Gastrocnemius medialis (tissue), 4 donors: ENCODE measurements at regions of chr7 and their contacts with region 1.

Region 1: GRCh38 chr7:139494835-139495579 is 11.5 kb upstream of the KLRG2 start:
- DNase-seq: no peak
- ATAC-seq: no peak
- H3K4me3 ChIP-seq: no peak overlapping the region
- H3K27ac ChIP-seq: no peak overlapping the region
- H3K4me1 ChIP-seq: no peaks in the 10 kb centered on the region
- H3K27me3 ChIP-seq: no peaks in the 10 kb centered on the region
- CTCF ChIP-seq: no peak
- POLR2A ChIP-seq: no peak

Region 2: GRCh38 chr7:139482662-139483469 is 12.1 kb before region 1 on chr7:
- in situ Hi-C with region 1: no loop called
- intact Hi-C with region 1: no loop called
- DNase-seq: no peak
- ATAC-seq: no peak
- H3K4me3 ChIP-seq: peak overlapping the region; percentile 17 to 44 (median 36)
- H3K27ac ChIP-seq: no peak overlapping the region
- H3K4me1 ChIP-seq: peaks cover 0 to 8% of the 10 kb centered on the region in 2 donors
- H3K27me3 ChIP-seq: peaks cover 28 to 39% (median 33%) of the 10 kb centered on the region in 3 donors
- CTCF ChIP-seq: no peak
- POLR2A ChIP-seq: no peak

Region 3: DNA sequence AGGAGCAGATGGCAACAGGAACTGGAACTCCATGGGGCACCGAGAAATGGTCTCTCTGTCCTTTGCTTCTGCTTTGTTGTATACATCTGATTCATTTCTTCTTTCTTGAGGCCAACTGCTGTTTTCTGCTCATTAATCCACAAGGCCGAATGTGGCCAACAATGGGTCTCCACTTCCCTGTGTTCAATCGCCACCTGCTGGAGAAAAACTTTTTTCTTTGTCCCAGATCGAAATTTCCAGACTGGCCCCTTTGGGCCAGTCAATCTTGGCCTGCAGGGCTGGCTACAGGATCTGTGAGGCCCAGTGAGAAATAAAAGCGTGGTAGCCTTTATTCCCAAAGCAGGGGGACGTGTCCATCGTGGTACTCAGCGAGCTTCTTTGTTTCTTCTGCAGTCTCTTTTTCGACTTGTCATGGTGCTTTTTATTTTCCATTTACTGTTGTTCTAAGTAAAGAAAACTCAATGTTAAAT is 508.9 kb after region 1 on chr7:
- in situ Hi-C with region 1: loop called (anchors 5 to 10 kb)
- intact Hi-C with region 1: loop called (anchors 2 kb)
- DNase-seq: no peak
- ATAC-seq: no peak
- H3K4me3 ChIP-seq: no peak overlapping the region
- H3K27ac ChIP-seq: no peak overlapping the region
- H3K4me1 ChIP-seq: no peaks in the 10 kb centered on the region
- H3K27me3 ChIP-seq: no peaks in the 10 kb centered on the region
- CTCF ChIP-seq: peak in 4 of 5 experiments; percentile 16 to 42 (median 26)
- POLR2A ChIP-seq: no peak